AG04450 (cell line): ENCODE measurements at regions of chr1 and their contacts with region 1.

Region 1: GRCh38 chr1:201792534-201793305 is 36.2 kb upstream of the IPO9 start:
- DNase-seq: peak; percentile 65
- H3K4me3 ChIP-seq: no peak overlapping the region
- H3K27ac ChIP-seq: no peak overlapping the region
- H3K27me3 ChIP-seq: no peaks in the 10 kb centered on the region
- CTCF ChIP-seq: peak; percentile 99

Region 2: DNA sequence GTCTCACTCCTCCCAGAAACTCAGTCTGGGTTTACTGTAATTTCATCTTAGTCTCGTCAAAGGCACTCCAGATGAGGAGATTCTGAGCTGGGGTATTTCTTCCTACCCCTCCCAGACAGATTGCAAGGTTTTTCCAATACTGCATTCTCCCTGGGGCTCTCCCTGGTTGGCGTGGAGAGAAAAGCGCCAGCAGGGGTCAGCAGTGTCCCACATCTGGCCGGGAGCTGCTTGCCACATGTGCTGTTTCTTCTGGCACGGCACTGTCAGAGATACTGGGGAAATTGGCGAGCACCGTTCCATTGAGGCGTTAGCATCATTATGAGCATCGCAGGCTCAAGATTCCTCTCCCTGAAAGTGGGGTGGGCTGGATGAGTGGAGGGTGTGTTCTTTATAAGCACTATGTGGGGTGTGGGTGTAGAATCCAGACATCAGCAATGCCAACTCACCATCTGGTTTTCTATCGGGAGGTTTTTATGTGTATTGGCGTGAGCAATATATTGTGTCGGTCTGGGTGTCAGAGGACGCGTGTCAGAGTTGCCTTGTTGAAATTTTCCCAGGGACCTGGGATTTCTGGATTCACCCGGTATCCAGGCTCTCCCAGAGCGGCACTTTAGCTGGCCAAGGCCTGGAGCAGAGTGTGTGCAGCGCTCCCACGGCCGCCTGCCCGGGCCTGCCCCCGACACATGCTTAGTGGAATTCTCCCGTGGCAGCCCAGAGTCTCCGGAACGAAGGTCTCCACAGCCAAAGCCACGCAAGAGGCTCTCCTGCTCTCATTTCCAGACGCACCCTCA is 261.8 kb before region 1 on chr1:
- CTCF ChIA-PET with region 1: interaction called, 57 read pairs
- POLR2A ChIA-PET with region 1: interaction called, 3 read pairs
- DNase-seq: no peak
- H3K4me3 ChIP-seq: no peak overlapping the region
- H3K27ac ChIP-seq: peak overlapping the region; percentile 31
- H3K27me3 ChIP-seq: no peaks in the 10 kb centered on the region
- CTCF ChIP-seq: peak; percentile 92

Region 3: GRCh38 chr1:201559679-201560162 is 233.0 kb before region 1 on chr1:
- CTCF ChIA-PET with region 1: interaction called, 85 read pairs
- POLR2A ChIA-PET with region 1: no interaction called
- DNase-seq: peak; percentile 74
- H3K4me3 ChIP-seq: no peak overlapping the region
- H3K27ac ChIP-seq: no peak overlapping the region
- H3K27me3 ChIP-seq: no peaks in the 10 kb centered on the region
- CTCF ChIP-seq: peak; percentile 96

Region 4: DNA sequence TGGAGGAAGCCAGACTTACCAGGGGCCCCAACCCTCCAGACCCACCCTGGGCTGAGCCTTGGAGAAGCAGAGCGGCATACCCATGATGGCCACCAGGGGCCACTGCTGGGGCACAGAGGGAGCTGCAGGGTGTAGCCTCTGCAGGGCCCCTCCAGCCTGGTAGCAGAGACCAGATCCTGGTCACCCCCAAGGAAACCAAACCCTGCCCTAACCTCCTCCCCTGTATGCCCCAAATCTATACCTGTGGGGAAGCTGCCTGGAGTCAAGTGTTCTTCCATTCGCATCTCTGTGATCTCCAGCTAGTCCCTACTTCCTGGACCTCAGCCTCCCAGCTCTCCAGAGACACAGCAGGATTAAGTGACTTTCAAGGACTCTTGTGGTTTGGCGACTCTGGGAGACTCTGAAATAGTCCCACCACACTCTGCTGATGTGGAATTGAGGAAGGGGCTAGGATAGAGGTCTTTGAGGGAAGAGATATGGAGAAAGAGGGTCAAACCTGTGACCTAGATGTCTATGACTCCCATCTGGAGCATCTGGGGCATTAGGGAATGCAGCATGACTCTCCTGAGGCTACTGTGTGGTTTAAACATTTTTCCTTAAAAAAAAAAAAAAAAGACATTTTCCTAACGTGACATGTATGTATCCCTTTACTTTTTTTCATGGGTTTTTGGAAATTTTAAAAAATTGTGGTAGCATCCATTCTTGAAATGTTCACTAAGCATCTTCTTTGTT is 83.0 kb before region 1 on chr1:
- CTCF ChIA-PET with region 1: interaction called, 232 read pairs
- POLR2A ChIA-PET with region 1: interaction called, 11 read pairs
- DNase-seq: no peak
- H3K4me3 ChIP-seq: no peak overlapping the region
- H3K27ac ChIP-seq: peak overlapping the region; percentile 70
- H3K27me3 ChIP-seq: no peaks in the 10 kb centered on the region
- CTCF ChIP-seq: peak; percentile 85

Region 5: GRCh38 chr1:201737352-201738060 is 55.2 kb before region 1 on chr1:
- CTCF ChIA-PET with region 1: interaction called, 11 read pairs
- POLR2A ChIA-PET with region 1: interaction called, 3 read pairs
- DNase-seq: no peak
- H3K4me3 ChIP-seq: no peak overlapping the region
- H3K27ac ChIP-seq: peak overlapping the region; percentile 65
- H3K27me3 ChIP-seq: no peaks in the 10 kb centered on the region
- CTCF ChIP-seq: no peak

Region 6: GRCh38 chr1:201769966-201770365 is 22.8 kb before region 1 on chr1:
- CTCF ChIA-PET with region 1: interaction called, 22 read pairs
- POLR2A ChIA-PET with region 1: no interaction called
- DNase-seq: no peak
- H3K4me3 ChIP-seq: no peak overlapping the region
- H3K27ac ChIP-seq: no peak overlapping the region
- H3K27me3 ChIP-seq: no peaks in the 10 kb centered on the region
- CTCF ChIP-seq: no peak

Region 7: GRCh38 chr1:201807958-201808632 is 15.4 kb after region 1 on chr1:
- CTCF ChIA-PET with region 1: interaction called, 18 read pairs
- POLR2A ChIA-PET with region 1: no interaction called
- DNase-seq: no peak
- H3K4me3 ChIP-seq: no peak overlapping the region
- H3K27ac ChIP-seq: no peak overlapping the region
- H3K27me3 ChIP-seq: no peaks in the 10 kb centered on the region
- CTCF ChIP-seq: no peak